ENCODE measurements at regions of chr6 and their contacts with region 1.

Region 1: GRCh38 chr6:11324453-11325015 is 92.1 kb upstream of the NEDD9 start:
- DNase-seq: peak; percentile 77
- ATAC-seq: peak; percentile 93
- H3K4me3 Mint-ChIP-seq: peak overlapping the region; percentile 42
- H3K27ac Mint-ChIP-seq: peak overlapping the region; percentile 86
- H3K4me1 Mint-ChIP-seq: peaks cover 68% of the 10 kb centered on the region
- H3K27me3 Mint-ChIP-seq: no peaks in the 10 kb centered on the region

Region 2: DNA sequence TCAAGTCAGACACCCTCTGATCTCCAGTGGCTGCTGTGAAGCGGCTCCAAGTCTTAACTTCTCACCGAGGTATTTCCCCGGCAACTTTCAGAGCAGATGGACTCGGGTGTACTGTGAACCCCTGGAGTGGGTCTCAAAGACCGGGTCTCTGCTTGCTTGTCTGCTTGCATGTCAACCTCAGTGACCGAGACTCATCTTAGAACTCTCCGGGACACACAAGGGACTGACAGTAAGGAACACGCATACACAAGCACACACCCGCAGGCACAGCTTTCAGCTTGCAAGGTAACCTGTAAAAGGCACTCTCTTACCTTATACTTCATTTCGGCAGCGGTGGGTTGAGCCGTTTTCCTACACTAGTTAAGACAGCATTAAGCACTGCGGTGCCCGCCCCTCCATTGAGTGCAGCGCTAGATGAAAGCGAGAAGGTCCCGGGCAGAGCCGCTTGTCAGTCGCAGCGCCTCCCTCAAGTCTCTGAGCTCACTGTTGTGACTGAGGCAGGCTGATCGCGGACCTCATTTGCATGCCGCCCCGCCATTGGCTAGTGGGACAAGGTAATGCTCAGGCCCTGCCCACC is 92.3 kb before region 1 on chr6 and contains the start of gene NEDD9:
- CTCF ChIA-PET with region 1: no interaction called
- POLR2A ChIA-PET with region 1: no interaction called
- intact Hi-C with region 1: loop called (anchors 1 kb)
- DNase-seq: peak; percentile 97
- ATAC-seq: peak; percentile 96
- H3K4me3 Mint-ChIP-seq: peak within 1 kb of the TSS; percentile 81
- H3K27ac Mint-ChIP-seq: peak within 1 kb of the TSS; percentile 95
- H3K4me1 Mint-ChIP-seq: peaks cover 65% of the 10 kb centered on the region
- H3K27me3 Mint-ChIP-seq: no peaks in the 10 kb centered on the region
- total RNA-seq, gene NEDD9: 23.6 to 27.3 TPM

Region 3: GRCh38 chr6:11277275-11278206 is 47.0 kb before region 1 on chr6:
- CTCF ChIA-PET with region 1: interaction called, 3 read pairs
- POLR2A ChIA-PET with region 1: no interaction called
- intact Hi-C with region 1: loop called (anchors 2 to 5 kb)
- DNase-seq: peak; percentile 53
- ATAC-seq: peak; percentile 76
- H3K4me3 Mint-ChIP-seq: peak overlapping the region; percentile 40
- H3K27ac Mint-ChIP-seq: peak overlapping the region; percentile 91
- H3K4me1 Mint-ChIP-seq: peaks cover 46% of the 10 kb centered on the region
- H3K27me3 Mint-ChIP-seq: no peaks in the 10 kb centered on the region

Region 4: GRCh38 chr6:11343963-11344747 is 19.6 kb after region 1 on chr6:
- CTCF ChIA-PET with region 1: interaction called, 4 read pairs
- POLR2A ChIA-PET with region 1: no interaction called
- intact Hi-C with region 1: loop called in 1 of 2 experiments (anchors 1 kb)
- DNase-seq: no peak
- ATAC-seq: no peak
- H3K4me3 Mint-ChIP-seq: no peak overlapping the region
- H3K27ac Mint-ChIP-seq: peak overlapping the region; percentile 86
- H3K4me1 Mint-ChIP-seq: peaks cover 78% of the 10 kb centered on the region
- H3K27me3 Mint-ChIP-seq: no peaks in the 10 kb centered on the region

Region 5: GRCh38 chr6:11353921-11354389 is 29.4 kb after region 1 on chr6:
- CTCF ChIA-PET with region 1: interaction called, 6 read pairs
- POLR2A ChIA-PET with region 1: interaction called, 6 read pairs
- intact Hi-C with region 1: loop called (anchors 1 kb)
- DNase-seq: peak; percentile 90
- ATAC-seq: peak; percentile 92
- H3K4me3 Mint-ChIP-seq: peak overlapping the region; percentile 53
- H3K27ac Mint-ChIP-seq: peak overlapping the region; percentile 90
- H3K4me1 Mint-ChIP-seq: peaks cover 80% of the 10 kb centered on the region
- H3K27me3 Mint-ChIP-seq: no peaks in the 10 kb centered on the region

Region 6: GRCh38 chr6:11381801-11382513 is 57.4 kb after region 1 on chr6:
- CTCF ChIA-PET with region 1: interaction called, 3 read pairs
- POLR2A ChIA-PET with region 1: interaction called, 3 read pairs
- intact Hi-C with region 1: loop called in 1 of 2 experiments (anchors 1 kb)
- DNase-seq: peak; percentile 80
- ATAC-seq: peak; percentile 93
- H3K4me3 Mint-ChIP-seq: peak overlapping the region; percentile 78
- H3K27ac Mint-ChIP-seq: peak overlapping the region; percentile 88
- H3K4me1 Mint-ChIP-seq: peaks cover 56% of the 10 kb centered on the region
- H3K27me3 Mint-ChIP-seq: peaks cover 2% of the 10 kb centered on the region

Region 7: GRCh38 chr6:12585497-12586041 is 1261.0 kb after region 1 on chr6:
- CTCF ChIA-PET with region 1: no interaction called
- POLR2A ChIA-PET with region 1: no interaction called
- intact Hi-C with region 1: no loop called
- DNase-seq: no peak
- ATAC-seq: no peak
- H3K4me3 Mint-ChIP-seq: no peak overlapping the region
- H3K27ac Mint-ChIP-seq: no peak overlapping the region
- H3K4me1 Mint-ChIP-seq: no peaks in the 10 kb centered on the region
- H3K27me3 Mint-ChIP-seq: no peaks in the 10 kb centered on the region